ENCODE measurements at regions of chr20 and their contacts with region 1.

Region 1: GRCh38 chr20:3051385-3052019 is 5.7 kb downstream of the MRPS26 start:
- DNase-seq: no peak
- ATAC-seq: peak; percentile 44
- H3K4me3 Mint-ChIP-seq: no peak overlapping the region
- H3K27ac Mint-ChIP-seq: no peak overlapping the region
- H3K4me1 Mint-ChIP-seq: peaks cover 29% of the 10 kb centered on the region
- H3K27me3 Mint-ChIP-seq: no peaks in the 10 kb centered on the region

Region 2: GRCh38 chr20:2984956-2985661 is 66.4 kb before region 1 on chr20:
- CTCF ChIA-PET with region 1: no interaction called
- POLR2A ChIA-PET with region 1: no interaction called
- DNase-seq: no peak
- ATAC-seq: no peak
- H3K4me3 Mint-ChIP-seq: no peak overlapping the region
- H3K27ac Mint-ChIP-seq: no peak overlapping the region
- H3K4me1 Mint-ChIP-seq: peaks cover 39% of the 10 kb centered on the region
- H3K27me3 Mint-ChIP-seq: no peaks in the 10 kb centered on the region

Region 3: GRCh38 chr20:3077618-3078134 is 26.2 kb after region 1 on chr20:
- CTCF ChIA-PET with region 1: interaction called, 12 read pairs
- POLR2A ChIA-PET with region 1: no interaction called
- DNase-seq: peak; percentile 53
- ATAC-seq: peak; percentile 58
- H3K4me3 Mint-ChIP-seq: peak overlapping the region; percentile 26
- H3K27ac Mint-ChIP-seq: peak overlapping the region; percentile 34
- H3K4me1 Mint-ChIP-seq: peaks cover 29% of the 10 kb centered on the region
- H3K27me3 Mint-ChIP-seq: peaks cover 46% of the 10 kb centered on the region

Region 4: GRCh38 chr20:3237958-3238615 is 186.6 kb after region 1 on chr20:
- CTCF ChIA-PET with region 1: no interaction called
- POLR2A ChIA-PET with region 1: no interaction called
- DNase-seq: peak; percentile 27
- ATAC-seq: peak; percentile 32
- H3K4me3 Mint-ChIP-seq: peak overlapping the region; percentile 78
- H3K27ac Mint-ChIP-seq: no peak overlapping the region
- H3K4me1 Mint-ChIP-seq: peaks cover 13% of the 10 kb centered on the region
- H3K27me3 Mint-ChIP-seq: peaks cover 46% of the 10 kb centered on the region

Region 5: DNA sequence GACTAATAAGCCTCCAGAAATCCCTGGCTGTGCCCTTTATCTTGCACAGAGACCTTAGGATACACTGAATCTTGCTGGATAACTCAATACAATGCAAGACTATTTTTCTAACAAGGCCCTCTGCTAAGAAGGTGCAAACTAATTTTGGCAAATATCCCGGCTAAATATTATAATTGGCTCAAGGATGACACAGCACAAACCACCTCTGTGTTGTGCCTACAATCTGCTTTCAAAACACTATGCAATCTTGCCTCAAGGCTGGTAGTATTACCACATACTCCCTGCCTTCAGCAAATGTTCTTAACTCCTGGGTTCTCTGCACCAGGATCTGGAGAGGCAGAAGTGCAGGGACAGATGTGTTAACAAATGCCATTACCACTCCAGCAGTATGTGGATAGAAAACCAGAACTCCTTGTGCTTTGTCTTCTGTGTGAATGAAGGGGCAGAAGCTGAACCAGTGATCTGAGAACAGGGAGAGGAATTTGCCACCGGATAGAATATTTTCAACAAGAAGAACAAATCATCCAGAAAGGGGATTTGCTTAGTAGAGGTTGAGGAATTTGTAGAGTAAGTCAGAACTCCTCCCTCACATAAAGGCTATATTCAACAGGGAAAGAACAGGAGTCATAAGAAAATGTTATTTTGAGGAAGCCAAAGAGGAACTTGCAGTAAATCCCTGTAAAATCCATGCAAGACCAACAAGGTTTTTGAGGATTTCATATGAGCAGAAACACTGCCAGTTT is 261.6 kb after region 1 on chr20:
- CTCF ChIA-PET with region 1: interaction called, 13 read pairs
- POLR2A ChIA-PET with region 1: no interaction called
- DNase-seq: no peak
- ATAC-seq: no peak
- H3K4me3 Mint-ChIP-seq: no peak overlapping the region
- H3K27ac Mint-ChIP-seq: no peak overlapping the region
- H3K4me1 Mint-ChIP-seq: no peaks in the 10 kb centered on the region
- H3K27me3 Mint-ChIP-seq: no peaks in the 10 kb centered on the region

Measured in activated CD8-positive, alpha-beta T cell treated with anti-CD3 and anti-CD28 coated beads, Interleukin-2, amount 10 ng/mL, durations not matched to agents 7 days and 5 days (primary cell).